Activated naive CD4-positive, alpha-beta T cell treated with anti-CD3 and anti-CD28 coated beads for 36 hours (primary cell): ENCODE measurements at regions of chr2 and their contacts with region 1.

Region 1: DNA sequence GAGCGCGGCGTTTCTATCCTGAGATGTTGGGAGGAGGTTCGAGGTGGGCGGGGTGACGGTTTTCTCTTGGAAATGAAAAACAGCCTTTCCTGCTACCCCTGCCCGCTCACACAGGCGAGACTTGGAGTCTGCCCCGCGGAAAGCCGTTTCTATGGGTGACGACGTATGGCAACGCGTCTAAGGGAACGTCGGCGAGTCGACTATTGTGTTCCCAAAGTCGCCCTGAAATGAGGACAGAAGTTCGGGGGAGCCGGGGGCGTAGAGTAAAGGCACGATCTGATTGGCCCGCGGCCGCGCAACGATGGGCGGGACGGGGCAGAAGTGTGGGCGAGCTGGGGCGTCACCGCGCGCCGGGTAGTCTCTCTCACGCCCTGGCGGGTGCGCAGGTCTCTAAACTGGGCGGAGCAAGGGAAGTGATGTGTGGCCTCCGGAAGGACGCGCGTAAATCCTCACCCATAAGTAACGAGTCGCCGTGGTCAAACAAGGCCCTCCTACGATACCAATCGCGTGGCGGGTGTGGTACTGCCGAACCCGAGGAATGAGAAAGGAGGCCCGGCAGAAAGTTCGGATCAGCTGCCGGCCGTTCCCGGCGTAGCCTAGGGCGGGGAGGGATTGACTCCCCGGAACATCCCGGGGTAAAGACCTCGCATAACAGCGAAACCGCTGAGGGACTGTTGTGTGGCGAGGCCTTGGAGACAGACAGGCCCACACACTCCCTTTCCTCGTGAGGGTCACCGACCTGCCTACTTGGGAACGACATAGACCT is 89.6 kb downstream of the FAM161A start:
- DNase-seq: peak; percentile 98
- H3K4me3 Mint-ChIP-seq: peak overlapping the region; percentile 91
- H3K27ac Mint-ChIP-seq: peak overlapping the region; percentile 94
- H3K4me1 Mint-ChIP-seq: peaks cover 16% of the 10 kb centered on the region
- H3K27me3 Mint-ChIP-seq: no peaks in the 10 kb centered on the region

Region 2: DNA sequence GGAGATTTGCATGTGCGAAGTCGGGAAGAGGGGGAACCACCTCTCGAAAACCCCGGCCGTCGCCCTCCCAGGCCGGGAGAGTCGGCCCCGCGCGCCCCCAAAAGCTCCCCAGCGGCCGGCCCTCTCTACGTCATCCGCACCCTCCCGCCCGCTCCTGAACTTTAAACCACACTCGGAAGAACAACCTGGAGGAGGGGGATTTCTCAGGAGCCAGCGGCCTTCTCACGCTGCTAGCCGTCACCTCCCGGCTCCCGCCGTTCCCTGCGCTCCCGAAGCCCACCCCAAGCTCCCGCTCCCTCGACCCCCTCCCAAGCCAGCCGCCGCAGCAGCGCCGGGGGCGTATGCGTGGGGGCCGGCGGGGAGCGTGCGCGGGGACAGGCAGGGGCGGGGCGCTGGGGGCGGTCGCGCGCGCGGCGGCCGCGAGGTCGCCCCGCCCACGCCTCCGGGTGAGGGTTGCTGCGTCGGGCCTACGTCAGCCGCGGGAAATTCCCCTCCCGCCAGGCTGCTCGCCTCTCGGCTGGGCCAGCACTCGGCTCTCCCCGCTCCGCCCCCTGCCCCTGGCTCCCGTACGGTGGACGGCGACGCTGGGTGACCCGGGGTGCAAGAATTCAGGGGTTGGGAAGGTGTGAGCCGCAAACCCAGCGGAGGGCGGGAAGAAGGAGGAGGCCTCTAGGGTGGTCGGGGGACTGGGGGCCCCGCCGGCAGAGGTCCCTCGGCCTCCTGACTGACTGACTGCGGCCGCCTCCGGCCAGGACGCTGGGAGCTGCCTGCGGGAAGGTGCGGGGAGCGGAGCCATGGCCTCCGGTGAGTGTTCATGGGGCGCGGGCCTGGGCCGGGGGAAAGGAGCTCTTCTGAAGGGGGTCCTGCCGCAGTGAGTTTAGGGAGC is 882.9 kb before region 1 on chr2 and contains the start of gene REL:
- CTCF ChIA-PET with region 1: no interaction called
- intact Hi-C with region 1: loop called (anchors 2 kb)
- DNase-seq: peak; percentile 94
- H3K4me3 Mint-ChIP-seq: peak within 1 kb of the TSS; percentile 100
- H3K27ac Mint-ChIP-seq: peak within 1 kb of the TSS; percentile 98
- H3K4me1 Mint-ChIP-seq: peaks cover 21% of the 10 kb centered on the region
- H3K27me3 Mint-ChIP-seq: no peaks in the 10 kb centered on the region
- total RNA-seq, gene REL: 40.3 to 40.5 TPM

Region 3: GRCh38 chr2:61144697-61145268 is 619.4 kb before region 1 on chr2:
- CTCF ChIA-PET with region 1: no interaction called
- intact Hi-C with region 1: loop called (anchors 1 kb)
- DNase-seq: peak; percentile 97
- H3K4me3 Mint-ChIP-seq: peak overlapping the region; percentile 92
- H3K27ac Mint-ChIP-seq: peak overlapping the region; percentile 85
- H3K4me1 Mint-ChIP-seq: peaks cover 6% of the 10 kb centered on the region
- H3K27me3 Mint-ChIP-seq: no peaks in the 10 kb centered on the region

Region 4: DNA sequence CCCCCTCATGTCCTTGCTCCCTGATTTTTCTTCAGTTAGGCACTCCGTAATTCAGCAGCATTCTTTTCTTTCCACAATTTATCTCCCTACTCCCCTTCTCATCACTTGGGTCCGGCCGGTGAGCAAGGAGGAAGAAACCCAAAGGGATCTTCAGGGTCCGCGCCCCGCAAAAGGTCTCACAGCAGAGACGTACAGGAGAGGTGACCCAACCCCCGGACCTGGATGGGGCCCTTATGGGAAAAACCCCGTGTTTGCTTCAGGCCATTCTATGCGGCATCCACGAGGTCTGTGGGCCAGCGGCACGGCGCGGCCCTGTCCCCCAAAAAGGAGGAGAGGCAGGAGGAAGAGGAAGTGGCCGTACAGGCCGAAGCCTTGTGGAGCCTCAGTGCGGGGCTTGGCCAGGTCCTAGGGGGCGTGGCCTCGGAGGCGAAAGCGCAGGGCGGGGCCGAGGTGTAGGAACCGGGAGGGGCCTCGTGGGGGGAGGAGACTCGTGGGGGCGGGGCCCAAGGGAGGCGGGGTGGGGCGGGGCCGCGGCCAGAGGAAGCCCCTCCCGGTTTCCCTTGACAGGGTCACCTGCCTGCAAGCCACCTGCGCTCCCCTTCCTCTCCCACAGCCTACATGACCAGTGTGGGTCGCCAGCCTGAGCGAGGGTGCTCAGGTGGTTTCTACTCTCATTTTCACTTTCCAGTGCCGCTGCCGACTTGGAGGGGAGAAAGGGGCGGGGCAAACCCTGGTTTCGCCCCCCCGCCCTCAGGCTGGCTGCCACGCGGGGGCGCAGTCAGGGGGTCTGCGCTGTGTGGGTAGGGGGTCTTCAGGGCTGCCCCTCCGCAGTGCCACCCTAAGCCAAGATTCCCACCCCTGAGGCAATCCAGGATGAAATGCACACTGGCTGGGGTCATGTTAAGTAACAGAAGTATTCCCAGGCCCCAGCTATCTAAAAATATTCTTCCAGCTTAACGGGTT is 69.6 kb before region 1 on chr2:
- CTCF ChIA-PET with region 1: interaction called, 3 read pairs
- intact Hi-C with region 1: loop called (anchors 1 kb)
- DNase-seq: peak; percentile 88
- H3K4me3 Mint-ChIP-seq: peak overlapping the region; percentile 86
- H3K27ac Mint-ChIP-seq: peak overlapping the region; percentile 59
- H3K4me1 Mint-ChIP-seq: peaks cover 11% of the 10 kb centered on the region
- H3K27me3 Mint-ChIP-seq: no peaks in the 10 kb centered on the region

Region 5: GRCh38 chr2:61905372-61906185 is 141.4 kb after region 1 on chr2 and contains the start of gene COMMD1:
- CTCF ChIA-PET with region 1: no interaction called
- intact Hi-C with region 1: loop called (anchors 2 kb)
- DNase-seq: peak; percentile 92
- H3K4me3 Mint-ChIP-seq: peak within 1 kb of the TSS; percentile 96
- H3K27ac Mint-ChIP-seq: peak within 1 kb of the TSS; percentile 63
- H3K4me1 Mint-ChIP-seq: peaks cover 25% of the 10 kb centered on the region
- H3K27me3 Mint-ChIP-seq: no peaks in the 10 kb centered on the region
- total RNA-seq, gene COMMD1: 26.9 to 29.5 TPM

Region 6: GRCh38 chr2:62705007-62705829 is 941.0 kb after region 1 on chr2 and contains the start of gene EHBP1:
- CTCF ChIA-PET with region 1: no interaction called
- intact Hi-C with region 1: loop called (anchors 10 kb)
- DNase-seq: peak; percentile 98
- H3K4me3 Mint-ChIP-seq: peak within 1 kb of the TSS; percentile 90
- H3K27ac Mint-ChIP-seq: peak within 1 kb of the TSS; percentile 76
- H3K4me1 Mint-ChIP-seq: peaks cover 27% of the 10 kb centered on the region
- H3K27me3 Mint-ChIP-seq: no peaks in the 10 kb centered on the region
- total RNA-seq, gene EHBP1: 17.4 to 17.5 TPM